ENCODE measurements at regions of chr7 and their contacts with region 1.

Region 1: DNA sequence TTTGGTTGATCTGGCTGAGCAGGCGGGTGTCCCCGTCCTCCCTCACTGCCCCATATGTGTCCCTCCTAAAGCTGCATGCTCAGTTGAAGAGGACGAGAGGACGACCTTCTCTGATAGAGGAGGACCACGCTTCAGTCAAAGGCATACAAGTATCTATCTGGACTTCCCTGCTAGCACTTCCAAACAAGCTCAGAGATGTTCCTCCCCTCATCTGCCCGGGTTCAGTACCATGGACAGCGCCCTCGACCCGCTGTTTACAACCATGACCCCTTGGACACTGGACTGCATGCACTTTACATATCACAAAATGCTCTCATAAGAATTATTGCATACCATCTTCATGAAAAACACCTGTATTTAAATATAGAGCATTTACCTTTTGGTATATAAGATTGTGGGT is 26.9 kb upstream of the TRIM56 start:
- H3K4me3 Mint-ChIP-seq: no peak overlapping the region
- H3K27ac Mint-ChIP-seq: no peak overlapping the region
- H3K4me1 Mint-ChIP-seq: no peaks in the 10 kb centered on the region
- H3K27me3 Mint-ChIP-seq: peaks cover 44% of the 10 kb centered on the region

Region 2: DNA sequence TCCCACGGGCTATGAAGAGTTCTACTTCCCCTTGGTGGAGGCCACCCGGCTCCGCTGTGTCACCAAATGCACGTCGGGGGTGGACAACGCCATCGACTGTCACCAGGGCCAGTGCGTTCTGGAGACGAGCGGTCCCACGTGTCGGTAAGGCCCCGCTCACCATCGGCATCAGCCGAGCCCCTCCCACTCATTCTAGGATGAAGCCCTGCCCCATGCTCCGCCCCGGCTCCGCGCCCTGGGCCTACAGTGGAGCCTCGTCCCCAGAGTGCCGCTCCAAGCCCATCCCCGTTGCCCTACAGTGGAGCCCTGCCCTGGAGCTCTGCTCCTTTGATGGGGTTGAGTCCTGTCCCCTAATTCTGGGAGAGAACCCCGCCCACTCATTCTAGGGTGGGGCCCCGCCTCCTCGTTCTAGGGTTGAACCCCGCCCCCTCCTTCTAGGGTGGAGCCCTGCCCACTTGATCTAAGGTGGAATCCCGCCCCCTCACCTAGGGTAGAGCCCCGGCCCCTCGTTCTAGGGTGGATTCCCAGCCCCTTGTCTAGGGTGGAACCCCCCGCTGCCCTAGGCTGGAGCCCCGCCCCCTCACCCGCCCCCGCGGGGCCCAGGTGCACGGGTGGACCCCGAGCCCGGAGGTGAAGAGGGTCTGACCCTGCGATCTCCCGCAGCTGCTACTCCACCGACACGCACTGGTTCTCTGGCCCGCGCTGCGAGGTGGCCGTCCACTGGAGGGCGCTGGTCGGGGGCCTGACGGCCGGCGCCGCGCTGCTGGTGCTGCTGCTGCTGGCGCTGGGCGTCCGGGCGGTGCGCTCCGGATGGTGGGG is 92.4 kb before region 1 on chr7:
- intact Hi-C with region 1: loop called (anchors 2 kb)
- H3K4me3 Mint-ChIP-seq: no peak overlapping the region
- H3K27ac Mint-ChIP-seq: no peak overlapping the region
- H3K4me1 Mint-ChIP-seq: peaks cover 6% of the 10 kb centered on the region
- H3K27me3 Mint-ChIP-seq: peaks cover 65% of the 10 kb centered on the region

Region 3: GRCh38 chr7:100983451-100984187 is 74.7 kb before region 1 on chr7:
- intact Hi-C with region 1: no loop called
- H3K4me3 Mint-ChIP-seq: no peak overlapping the region
- H3K27ac Mint-ChIP-seq: no peak overlapping the region
- H3K4me1 Mint-ChIP-seq: no peaks in the 10 kb centered on the region
- H3K27me3 Mint-ChIP-seq: peaks cover 13% of the 10 kb centered on the region

Region 4: DNA sequence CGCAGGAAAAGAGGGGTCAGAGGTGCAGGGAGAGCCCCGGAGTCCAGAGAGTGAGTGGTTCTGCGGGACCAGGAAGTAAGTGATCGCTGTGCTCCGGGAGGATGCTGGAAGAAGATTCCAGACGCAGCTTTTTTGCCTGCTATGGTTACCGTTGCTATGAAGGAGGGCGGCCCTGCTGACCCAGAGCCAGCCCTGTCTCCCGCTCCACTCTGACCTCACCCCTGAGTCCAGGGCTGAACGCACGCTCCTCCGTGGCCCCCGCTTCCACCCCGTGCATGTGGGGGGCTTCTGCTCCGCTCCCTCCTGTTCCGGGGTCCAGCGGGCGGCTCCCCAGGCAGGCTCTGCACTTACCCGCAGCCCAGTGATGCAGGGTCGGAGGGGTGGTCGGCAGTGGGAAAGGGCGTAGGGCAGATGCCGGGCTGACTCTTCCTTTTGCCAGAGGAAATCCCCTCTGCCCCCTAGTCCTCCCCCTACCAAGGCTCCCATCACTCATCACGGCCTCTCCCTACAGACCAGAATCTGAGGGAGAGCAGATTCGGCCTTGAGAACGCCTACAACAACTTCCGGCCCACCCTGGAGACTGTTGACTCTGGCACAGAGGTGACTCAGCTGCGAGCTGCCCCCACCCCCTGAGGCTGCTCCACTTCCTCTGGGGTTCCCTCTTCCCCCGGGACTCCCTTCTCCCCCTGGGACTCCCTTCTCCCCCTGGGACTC is 41.1 kb before region 1 on chr7:
- intact Hi-C with region 1: no loop called
- H3K4me3 Mint-ChIP-seq: peak overlapping the region; percentile 67
- H3K27ac Mint-ChIP-seq: peak overlapping the region; percentile 92
- H3K4me1 Mint-ChIP-seq: peaks cover 36% of the 10 kb centered on the region
- H3K27me3 Mint-ChIP-seq: peaks cover 59% of the 10 kb centered on the region

Region 5: GRCh38 chr7:101278461-101279292 is 220.3 kb after region 1 on chr7:
- intact Hi-C with region 1: no loop called
- H3K4me3 Mint-ChIP-seq: no peak overlapping the region
- H3K27ac Mint-ChIP-seq: no peak overlapping the region
- H3K4me1 Mint-ChIP-seq: peaks cover 5% of the 10 kb centered on the region
- H3K27me3 Mint-ChIP-seq: peaks cover 35% of the 10 kb centered on the region